Psoas muscle (tissue), 8 donors: ENCODE measurements at regions of chr9 and their contacts with region 1.

Region 1: GRCh38 chr9:96459268-96460007 is 9.5 kb downstream of the HABP4 start:
- DNase-seq: no peak
- ATAC-seq: no peak
- H3K4me3 ChIP-seq: no peak overlapping the region
- H3K27ac ChIP-seq: no peak overlapping the region
- H3K4me1 ChIP-seq: peaks cover 6% of the 10 kb centered on the region
- H3K27me3 ChIP-seq: no peaks in the 10 kb centered on the region
- CTCF ChIP-seq: no peak

Region 2: GRCh38 chr9:96514108-96514799 is 54.8 kb after region 1 on chr9:
- intact Hi-C with region 1: loop called in 1 of 2 experiments (anchors 2 kb)
- DNase-seq: no peak
- ATAC-seq: peak in 2 of 4 donors; percentile 38 to 42
- H3K4me3 ChIP-seq: no peak overlapping the region
- H3K27ac ChIP-seq: peak overlapping the region; percentile 15
- H3K4me1 ChIP-seq: no peaks in the 10 kb centered on the region
- H3K27me3 ChIP-seq: no peaks in the 10 kb centered on the region
- CTCF ChIP-seq: no peak